AG04450 (cell line): ENCODE measurements at regions of chr11 and their contacts with region 1.

Region 1: GRCh38 chr11:76524461-76524860 is 79.6 kb downstream of the EMSY start:
- DNase-seq: no peak
- H3K4me3 ChIP-seq: no peak overlapping the region
- H3K27ac ChIP-seq: no peak overlapping the region
- H3K27me3 ChIP-seq: no peaks in the 10 kb centered on the region
- CTCF ChIP-seq: no peak

Region 2: GRCh38 chr11:76629116-76629852 is 104.8 kb after region 1 on chr11:
- CTCF ChIA-PET with region 1: interaction called, 10 read pairs
- POLR2A ChIA-PET with region 1: no interaction called
- DNase-seq: no peak
- H3K4me3 ChIP-seq: no peak overlapping the region
- H3K27ac ChIP-seq: peak overlapping the region; percentile 57
- H3K27me3 ChIP-seq: no peaks in the 10 kb centered on the region
- CTCF ChIP-seq: no peak